ENCODE measurements at regions of chr11 and their contacts with region 1.

Region 1: DNA sequence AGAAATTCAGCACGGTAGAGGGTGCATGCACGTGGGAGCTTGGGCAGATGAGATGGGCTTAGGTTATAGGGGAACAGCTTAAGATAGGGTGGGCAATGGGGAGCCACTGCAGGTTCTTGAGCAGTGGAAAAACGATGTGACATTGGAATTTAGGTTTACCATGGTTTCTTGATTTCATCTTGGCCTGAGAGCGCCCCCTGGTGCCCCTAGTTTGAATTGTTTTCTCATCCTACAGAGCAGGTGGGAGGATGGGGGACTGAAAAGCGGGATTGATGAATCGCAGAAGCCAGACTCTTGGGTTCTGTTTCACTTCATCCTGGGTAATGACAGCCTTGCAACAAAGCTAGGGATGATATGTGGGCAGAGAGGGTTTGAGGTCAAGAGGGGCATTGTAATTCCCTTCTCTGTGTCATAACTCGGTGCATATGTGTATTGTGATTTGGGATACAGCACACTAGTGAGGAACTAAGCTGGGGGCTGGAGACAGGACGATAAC is 6.7 kb upstream of the MCAM start:
- DNase-seq: peak; percentile 94
- H3K4me3 Mint-ChIP-seq: no peak overlapping the region
- H3K27ac Mint-ChIP-seq: no peak overlapping the region
- H3K4me1 Mint-ChIP-seq: peaks cover 18% of the 10 kb centered on the region
- H3K27me3 Mint-ChIP-seq: peaks cover 6% of the 10 kb centered on the region

Region 2: GRCh38 chr11:119057000-119057769 is 266.4 kb before region 1 on chr11 and contains the start of gene HYOU1:
- CTCF ChIA-PET with region 1: interaction called, 3 read pairs
- intact Hi-C with region 1: loop called (anchors 2 kb)
- DNase-seq: peak; percentile 99
- H3K4me3 Mint-ChIP-seq: peak within 1 kb of the TSS; percentile 98
- H3K27ac Mint-ChIP-seq: peak within 1 kb of the TSS; percentile 95
- H3K4me1 Mint-ChIP-seq: peaks cover 53% of the 10 kb centered on the region
- H3K27me3 Mint-ChIP-seq: no peaks in the 10 kb centered on the region
- total RNA-seq, gene HYOU1: 108 to 116 TPM

Region 3: GRCh38 chr11:119144825-119145486 is 178.6 kb before region 1 on chr11:
- CTCF ChIA-PET with region 1: interaction called, 3 read pairs
- intact Hi-C with region 1: loop called (anchors 1 kb)
- DNase-seq: peak; percentile 43
- H3K4me3 Mint-ChIP-seq: no peak overlapping the region
- H3K27ac Mint-ChIP-seq: no peak overlapping the region
- H3K4me1 Mint-ChIP-seq: peaks cover 5% of the 10 kb centered on the region
- H3K27me3 Mint-ChIP-seq: peaks cover 38% of the 10 kb centered on the region

Region 4: DNA sequence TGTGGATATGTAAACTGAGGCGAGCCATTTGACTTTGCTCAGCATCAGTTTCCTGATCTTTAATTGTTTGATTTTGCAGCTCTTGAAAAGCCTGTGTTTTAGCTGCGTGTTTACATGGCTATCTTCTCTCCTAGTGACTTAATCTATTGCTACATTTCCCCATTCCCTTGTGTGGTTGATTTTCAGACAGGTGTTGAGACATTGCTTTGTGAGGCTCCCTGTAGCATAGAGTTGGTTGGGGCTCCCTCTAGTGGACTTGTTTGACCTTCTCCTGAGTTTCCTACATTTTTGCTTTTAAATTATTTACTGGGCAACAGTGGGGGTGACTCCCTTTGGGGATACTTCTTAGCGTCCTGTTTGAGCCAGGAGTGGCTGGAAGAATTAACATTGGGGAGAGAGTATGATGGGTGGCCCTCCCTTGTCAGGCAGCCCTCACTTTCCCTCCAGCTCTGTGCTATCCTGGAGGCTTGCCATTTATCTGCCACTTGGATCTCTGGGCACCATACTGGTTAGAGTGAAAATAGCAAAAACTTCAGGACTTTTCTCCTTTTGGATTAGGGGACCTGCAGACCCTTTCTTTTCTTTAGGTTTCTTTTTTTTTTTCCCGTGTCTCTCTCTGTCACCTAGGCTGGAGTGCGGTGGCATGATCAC is 126.6 kb before region 1 on chr11:
- CTCF ChIA-PET with region 1: interaction called, 31 read pairs
- intact Hi-C with region 1: loop called (anchors 1 kb)
- DNase-seq: peak; percentile 88
- H3K4me3 Mint-ChIP-seq: no peak overlapping the region
- H3K27ac Mint-ChIP-seq: no peak overlapping the region
- H3K4me1 Mint-ChIP-seq: no peaks in the 10 kb centered on the region
- H3K27me3 Mint-ChIP-seq: no peaks in the 10 kb centered on the region

Region 5: GRCh38 chr11:119262668-119263351 is 60.8 kb before region 1 on chr11:
- CTCF ChIA-PET with region 1: interaction called, 4 read pairs
- intact Hi-C with region 1: loop called (anchors 1 kb)
- DNase-seq: peak; percentile 35
- H3K4me3 Mint-ChIP-seq: no peak overlapping the region
- H3K27ac Mint-ChIP-seq: no peak overlapping the region
- H3K4me1 Mint-ChIP-seq: peaks cover 56% of the 10 kb centered on the region
- H3K27me3 Mint-ChIP-seq: no peaks in the 10 kb centered on the region

Region 6: DNA sequence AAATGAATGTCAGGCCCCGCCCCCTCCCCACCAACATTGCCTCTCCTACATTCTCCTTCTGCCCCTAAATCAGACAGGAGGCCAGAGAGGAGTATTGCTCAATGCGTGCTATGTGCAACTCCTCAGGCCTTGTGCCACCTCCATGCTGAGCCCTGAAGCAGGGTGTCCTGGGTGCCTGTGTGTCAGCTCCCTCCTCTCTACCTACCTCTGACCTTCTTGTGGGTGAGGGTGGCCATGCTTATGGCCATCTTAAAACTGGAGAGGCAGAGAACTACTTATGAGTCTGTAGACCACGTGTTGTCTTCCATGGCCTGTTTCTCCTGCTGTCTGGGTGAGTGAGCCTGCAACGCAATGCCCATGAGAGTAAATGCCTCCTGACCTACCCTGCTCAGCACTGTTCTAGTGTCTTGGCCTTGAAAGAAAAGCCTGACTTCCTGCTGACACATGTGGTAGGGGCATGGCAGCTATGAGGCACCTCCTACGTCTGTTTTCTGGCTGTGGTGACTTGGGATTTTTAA is 17.2 kb before region 1 on chr11:
- CTCF ChIA-PET with region 1: interaction called, 46 read pairs
- intact Hi-C with region 1: loop called (anchors 1 kb)
- DNase-seq: peak; percentile 74
- H3K4me3 Mint-ChIP-seq: peak overlapping the region; percentile 60
- H3K27ac Mint-ChIP-seq: peak overlapping the region; percentile 93
- H3K4me1 Mint-ChIP-seq: peaks cover 32% of the 10 kb centered on the region
- H3K27me3 Mint-ChIP-seq: no peaks in the 10 kb centered on the region